ENCODE measurements at regions of chr12 and their contacts with region 1.

Region 1: DNA sequence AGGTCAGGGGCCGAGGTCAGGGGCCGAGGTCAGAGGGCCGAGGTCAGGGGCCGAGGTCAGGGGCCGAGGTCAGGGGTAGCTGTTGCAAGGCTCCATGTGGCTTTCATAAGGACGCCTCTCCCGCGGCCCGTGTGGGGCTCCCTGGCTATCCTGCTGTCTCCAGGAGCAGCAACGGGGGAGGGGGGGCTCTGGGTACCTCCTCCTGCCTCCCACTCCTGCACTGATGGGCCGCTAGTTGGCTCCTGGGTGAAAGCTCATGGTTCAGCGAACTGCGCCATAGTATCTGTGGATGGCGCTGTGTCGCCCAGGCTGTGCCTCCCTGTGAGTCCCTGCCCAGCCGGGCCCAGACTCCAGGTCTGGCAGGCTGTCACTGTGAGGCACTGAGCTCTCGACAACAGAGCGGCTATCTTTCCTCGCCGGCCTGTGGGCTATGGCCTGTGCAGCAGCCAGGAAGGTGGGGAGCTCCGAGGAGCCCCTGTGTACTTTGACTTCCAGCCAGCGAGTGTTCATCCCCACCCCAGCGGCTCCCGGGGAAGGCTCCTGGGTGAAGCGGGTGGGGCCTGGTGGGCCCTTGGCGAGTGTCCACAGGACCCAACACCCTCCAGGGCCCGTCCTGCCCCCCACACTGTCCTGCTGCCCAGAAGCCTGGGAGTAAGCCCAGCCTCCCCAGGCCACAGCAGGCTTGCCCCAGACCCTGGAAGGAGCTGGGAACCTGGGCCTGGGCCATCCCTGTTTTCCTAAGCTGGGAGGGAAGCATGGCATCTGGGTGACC is 8.1 kb downstream of the RFLNA start:
- DNase-seq: peak in 1 of 3 donors; percentile 42
- ATAC-seq: no peak
- H3K4me3 ChIP-seq: no peak overlapping the region
- H3K27ac ChIP-seq: no peak overlapping the region
- H3K4me1 ChIP-seq: no peaks in the 10 kb centered on the region
- H3K27me3 ChIP-seq: no peaks in the 10 kb centered on the region
- CTCF ChIP-seq: no peak
- POLR2A ChIP-seq: no peak

Region 2: DNA sequence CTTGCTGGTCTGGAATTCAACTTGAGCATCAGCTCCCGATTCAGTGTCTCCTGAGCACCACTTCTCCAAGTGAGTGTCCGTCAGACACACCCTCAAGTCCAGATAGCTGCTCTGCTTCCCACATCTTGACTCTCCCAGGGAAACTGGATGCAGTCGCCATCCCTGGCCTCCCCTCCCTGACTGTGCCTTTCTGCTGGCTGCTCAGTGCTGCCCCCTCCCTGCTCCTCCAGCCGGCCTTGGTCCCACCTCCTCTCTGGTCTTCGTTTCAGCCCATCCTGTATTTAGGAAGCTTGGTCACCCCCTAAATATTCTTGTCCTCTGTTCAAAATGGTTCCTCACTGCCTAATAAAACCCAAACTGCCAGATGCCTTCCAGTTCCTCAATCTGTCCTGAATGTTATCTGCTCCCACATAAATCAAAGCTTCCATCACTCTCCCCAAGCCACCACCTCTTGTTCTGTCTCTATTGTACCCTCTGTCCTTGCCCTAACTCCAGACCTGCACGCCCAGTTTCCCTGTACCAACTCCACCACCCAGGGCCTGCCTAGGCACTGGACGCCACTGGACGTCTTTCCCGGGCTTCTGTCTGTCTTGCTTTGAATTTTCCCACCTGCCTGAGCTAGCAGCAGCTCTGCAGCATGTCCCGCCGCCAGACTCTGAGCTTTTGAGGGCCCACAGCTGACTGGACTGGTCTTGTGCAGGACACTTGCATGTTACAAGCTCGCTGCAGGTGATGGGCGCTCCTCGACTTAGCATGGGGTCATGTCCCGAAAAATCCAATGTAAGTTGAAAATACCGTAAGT is 364.1 kb before region 1 on chr12:
- intact Hi-C with region 1: loop called in 1 of 2 experiments (anchors 10 kb)
- DNase-seq: no peak
- ATAC-seq: peak in 1 of 4 donors; percentile 33
- H3K4me3 ChIP-seq: no peak overlapping the region
- H3K27ac ChIP-seq: no peak overlapping the region
- H3K4me1 ChIP-seq: no peaks in the 10 kb centered on the region
- H3K27me3 ChIP-seq: no peaks in the 10 kb centered on the region
- CTCF ChIP-seq: no peak
- POLR2A ChIP-seq: no peak

Region 3: DNA sequence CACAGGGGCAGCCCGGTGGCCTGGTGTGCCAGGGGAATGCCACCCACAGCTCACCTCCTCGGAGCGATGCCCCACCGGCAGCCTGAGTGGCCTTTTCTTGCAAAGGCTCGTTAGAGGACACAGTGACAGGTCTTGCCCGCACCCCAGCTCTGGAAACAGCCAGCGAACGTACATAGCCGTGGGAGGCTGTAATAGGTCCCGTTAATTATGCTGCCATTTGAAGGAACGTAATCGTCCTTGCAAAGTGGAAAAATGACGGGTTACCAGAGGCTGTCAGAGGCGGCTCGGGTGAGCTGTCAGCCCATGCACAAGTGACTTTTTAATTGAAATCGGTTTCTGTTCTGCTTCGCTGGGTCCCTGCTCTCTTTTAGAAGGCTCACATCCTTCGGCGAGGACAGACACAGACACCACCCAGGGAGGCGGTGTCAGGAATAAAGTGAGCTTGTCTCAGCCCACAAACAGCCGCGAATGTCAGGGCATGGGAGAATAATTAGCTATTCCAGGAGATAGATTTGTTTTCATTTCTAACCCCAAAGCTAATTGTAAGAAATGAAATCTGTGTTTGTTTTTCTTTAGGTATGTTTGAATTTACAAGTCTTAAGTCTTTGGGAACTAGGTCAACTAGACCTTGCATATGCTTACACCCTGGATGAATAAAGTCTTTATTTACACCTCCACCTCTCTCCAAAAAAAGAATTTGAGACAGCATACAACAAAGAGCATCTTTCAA is 85.3 kb before region 1 on chr12:
- intact Hi-C with region 1: no loop called
- DNase-seq: no peak
- ATAC-seq: no peak
- H3K4me3 ChIP-seq: no peak overlapping the region
- H3K27ac ChIP-seq: no peak overlapping the region
- H3K4me1 ChIP-seq: no peaks in the 10 kb centered on the region
- H3K27me3 ChIP-seq: no peaks in the 10 kb centered on the region
- CTCF ChIP-seq: no peak
- POLR2A ChIP-seq: no peak